ENCODE measurements at regions of chrX and their contacts with region 1.

Region 1: DNA sequence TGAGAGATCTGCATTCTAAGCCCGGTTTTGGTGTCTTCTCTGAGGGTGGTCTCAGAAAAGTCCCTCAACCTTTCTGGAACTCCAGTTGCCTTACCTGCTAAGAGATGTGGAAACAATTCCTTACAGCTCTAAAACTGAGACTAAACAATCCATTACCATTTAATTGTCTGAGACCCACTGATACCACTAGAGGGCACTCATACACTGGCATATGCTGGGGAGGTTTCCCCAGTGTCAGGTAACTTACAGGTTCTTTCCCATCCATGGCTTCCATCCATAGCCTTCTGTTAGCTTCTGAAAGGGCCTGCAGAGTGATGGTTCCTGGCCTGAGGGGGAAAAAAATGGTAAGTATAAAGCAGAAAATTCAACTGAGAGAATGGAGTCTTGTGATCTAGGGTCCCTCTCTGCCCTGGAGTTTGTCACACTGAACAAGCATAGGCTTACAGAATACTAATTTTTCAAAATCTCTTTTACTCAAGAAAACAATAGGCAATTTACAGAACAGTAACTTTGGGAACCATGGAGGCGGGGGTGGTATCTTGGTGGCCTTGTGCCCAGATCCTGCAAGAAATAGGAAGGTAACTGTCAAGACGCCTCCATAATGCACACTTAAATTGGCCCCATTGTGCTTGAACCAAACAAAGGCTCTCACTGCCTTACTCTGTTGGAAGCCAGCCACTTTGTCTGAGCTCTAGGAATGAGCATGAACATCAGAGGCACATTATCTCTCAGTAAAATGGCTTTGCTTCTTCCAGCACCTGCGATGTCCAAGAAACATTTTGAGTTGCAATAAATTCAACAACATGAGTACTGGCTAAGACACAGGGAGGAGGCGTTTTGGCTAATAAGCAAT is 236.1 kb downstream of the OPHN1 start:
- DNase-seq: no peak
- H3K4me3 ChIP-seq: no peak overlapping the region
- H3K27ac ChIP-seq: no peak overlapping the region
- H3K4me1 ChIP-seq: no peaks in the 10 kb centered on the region
- H3K27me3 ChIP-seq: no peaks in the 10 kb centered on the region
- CTCF ChIP-seq: peak; percentile 46 to 50

Region 2: DNA sequence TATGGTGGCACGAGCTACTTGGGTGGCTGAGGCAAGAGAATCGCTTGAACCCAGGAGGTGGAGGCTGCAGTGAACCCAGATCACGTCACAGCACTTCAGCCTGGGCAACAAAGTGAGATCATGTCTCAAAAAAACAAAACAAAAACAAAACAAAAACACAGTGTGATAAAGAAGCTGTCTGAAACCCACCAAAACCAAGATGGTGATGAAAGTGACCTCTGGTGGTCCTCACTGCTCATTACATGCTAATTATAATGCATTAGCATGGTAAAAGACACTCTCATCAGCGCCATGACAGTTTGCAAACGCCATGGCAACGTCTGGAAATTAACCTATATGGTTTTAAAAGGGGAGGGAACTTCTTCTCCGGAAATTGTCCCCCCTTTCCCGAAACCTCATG is 265.5 kb after region 1 on chrX:
- intact Hi-C with region 1: loop called (anchors 10 kb)
- DNase-seq: no peak
- H3K4me3 ChIP-seq: no peak overlapping the region
- H3K27ac ChIP-seq: no peak overlapping the region
- H3K4me1 ChIP-seq: no peaks in the 10 kb centered on the region
- H3K27me3 ChIP-seq: no peaks in the 10 kb centered on the region
- CTCF ChIP-seq: peak; percentile 47 to 54

Region 3: DNA sequence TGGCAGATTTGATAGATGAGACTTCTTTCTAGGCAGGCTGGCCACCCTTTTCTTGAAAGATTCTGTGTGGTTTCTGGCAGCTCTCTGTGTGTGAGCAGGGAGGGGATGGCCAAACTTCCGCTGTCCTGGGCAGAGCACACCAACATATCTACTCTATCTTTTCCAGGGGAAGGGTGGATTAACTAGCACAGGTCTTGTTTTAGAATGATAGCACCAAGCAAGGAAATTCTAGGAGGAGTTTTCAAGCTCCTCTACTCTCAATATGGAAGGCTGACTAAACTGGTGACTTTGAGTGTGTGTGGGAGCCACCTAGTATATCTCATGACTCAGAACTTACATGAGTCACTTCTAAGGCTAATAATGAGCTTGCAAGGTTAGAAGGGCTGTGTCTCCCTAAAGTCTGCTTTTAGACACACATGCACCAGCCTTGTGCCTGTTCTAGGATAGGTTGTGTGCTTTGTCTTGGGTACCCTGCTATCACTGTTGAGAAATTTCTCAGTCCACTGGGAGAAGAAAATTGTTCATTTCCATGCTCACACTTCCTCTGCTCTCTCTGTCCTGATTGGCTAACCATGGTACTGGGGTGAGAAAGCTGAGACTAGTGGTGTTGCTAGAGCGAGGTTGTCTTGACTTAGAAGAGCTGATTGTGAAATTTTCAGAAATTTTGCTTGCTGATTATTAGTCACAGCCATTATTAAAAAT is 374.6 kb after region 1 on chrX:
- intact Hi-C with region 1: no loop called
- DNase-seq: no peak
- H3K4me3 ChIP-seq: no peak overlapping the region
- H3K27ac ChIP-seq: no peak overlapping the region
- H3K4me1 ChIP-seq: no peaks in the 10 kb centered on the region
- H3K27me3 ChIP-seq: no peaks in the 10 kb centered on the region
- CTCF ChIP-seq: no peak

Measured in tibial artery (tissue), 4 donors.